Dorsolateral prefrontal cortex (tissue), 120 donors: ENCODE measurements at regions of chr14 and their contacts with region 1.

Region 1: DNA sequence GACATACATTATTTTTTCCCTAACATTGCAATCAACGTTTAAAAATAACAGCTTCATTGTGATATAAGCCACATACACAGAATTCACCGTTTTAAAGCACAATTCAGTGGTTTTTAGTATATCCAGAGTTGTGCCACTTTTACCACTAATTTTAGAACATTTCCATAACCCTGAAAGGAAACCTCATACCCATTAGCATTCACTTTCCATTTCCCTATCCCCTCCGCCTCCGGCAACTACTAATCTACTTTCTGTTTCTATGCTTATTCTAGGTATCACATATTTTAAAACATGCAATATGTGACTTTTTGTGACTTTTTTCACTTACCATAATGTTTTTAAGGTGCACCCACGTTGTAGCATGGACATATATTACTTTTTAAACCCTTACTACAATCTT is 55.6 kb upstream of the ISM2 start:
- DNase-seq: no peak
- H3K4me3 ChIP-seq: peak overlapping the region in 6 of 59 donors; percentile 1 to 34 (median 7)
- H3K27ac ChIP-seq: peak overlapping the region; percentile 19 to 99 (median 91)
- H3K27me3 ChIP-seq: no peaks in the 10 kb centered on the region
- CTCF ChIP-seq: no peak

Region 2: DNA sequence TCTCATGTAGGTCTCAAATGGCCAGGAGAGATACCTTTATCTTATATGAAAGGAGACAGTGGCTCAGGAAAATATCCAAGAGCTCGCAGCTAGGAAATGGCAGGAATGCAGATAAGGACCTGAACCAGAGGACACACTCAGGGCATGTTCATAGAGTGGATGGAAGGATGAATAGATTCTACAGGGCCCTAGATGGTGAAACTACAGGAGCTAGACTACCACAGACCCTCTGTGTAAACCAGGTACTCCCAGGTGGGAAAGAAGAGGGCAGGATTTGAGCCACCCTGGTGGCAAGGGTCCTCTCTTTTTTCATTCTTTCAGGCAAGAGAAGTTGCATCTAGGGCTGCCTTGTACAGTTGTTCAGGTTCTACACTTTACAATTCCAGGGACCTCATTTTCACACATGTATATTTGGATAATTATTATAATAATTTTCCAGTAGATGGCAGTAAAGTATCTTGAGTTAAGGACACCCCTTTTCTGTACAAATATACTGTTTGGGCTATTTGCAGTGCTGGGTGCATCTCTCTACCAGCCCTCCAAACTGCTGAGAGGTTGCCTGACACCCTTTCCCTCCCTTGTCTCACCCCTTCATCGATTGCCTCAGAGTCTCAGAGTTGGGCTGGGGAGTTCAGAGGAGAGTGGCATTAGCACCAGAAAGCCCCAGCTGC is 402.2 kb before region 1 on chr14:
- intact Hi-C with region 1: loop called (anchors 5 to 10 kb)
- DNase-seq: no peak
- H3K4me3 ChIP-seq: no peak overlapping the region
- H3K27ac ChIP-seq: peak overlapping the region in 12 of 59 donors; percentile 0 to 63 (median 26)
- H3K27me3 ChIP-seq: no peaks in the 10 kb centered on the region
- CTCF ChIP-seq: peak in 53 of 56 donors; percentile 28 to 67 (median 48)

Region 3: GRCh38 chr14:77301103-77301502 is 253.1 kb before region 1 on chr14:
- intact Hi-C with region 1: loop called in 1 of 2 experiments (anchors 5 kb)
- DNase-seq: peak; percentile 65 to 94 (median 88)
- H3K4me3 ChIP-seq: peak overlapping the region in 28 of 59 donors; percentile 3 to 43 (median 20)
- H3K27ac ChIP-seq: peak overlapping the region in 58 of 59 donors; percentile 86 to 100 (median 99)
- H3K27me3 ChIP-seq: no peaks in the 10 kb centered on the region
- CTCF ChIP-seq: peak; percentile 69 to 99 (median 90)

Region 4: DNA sequence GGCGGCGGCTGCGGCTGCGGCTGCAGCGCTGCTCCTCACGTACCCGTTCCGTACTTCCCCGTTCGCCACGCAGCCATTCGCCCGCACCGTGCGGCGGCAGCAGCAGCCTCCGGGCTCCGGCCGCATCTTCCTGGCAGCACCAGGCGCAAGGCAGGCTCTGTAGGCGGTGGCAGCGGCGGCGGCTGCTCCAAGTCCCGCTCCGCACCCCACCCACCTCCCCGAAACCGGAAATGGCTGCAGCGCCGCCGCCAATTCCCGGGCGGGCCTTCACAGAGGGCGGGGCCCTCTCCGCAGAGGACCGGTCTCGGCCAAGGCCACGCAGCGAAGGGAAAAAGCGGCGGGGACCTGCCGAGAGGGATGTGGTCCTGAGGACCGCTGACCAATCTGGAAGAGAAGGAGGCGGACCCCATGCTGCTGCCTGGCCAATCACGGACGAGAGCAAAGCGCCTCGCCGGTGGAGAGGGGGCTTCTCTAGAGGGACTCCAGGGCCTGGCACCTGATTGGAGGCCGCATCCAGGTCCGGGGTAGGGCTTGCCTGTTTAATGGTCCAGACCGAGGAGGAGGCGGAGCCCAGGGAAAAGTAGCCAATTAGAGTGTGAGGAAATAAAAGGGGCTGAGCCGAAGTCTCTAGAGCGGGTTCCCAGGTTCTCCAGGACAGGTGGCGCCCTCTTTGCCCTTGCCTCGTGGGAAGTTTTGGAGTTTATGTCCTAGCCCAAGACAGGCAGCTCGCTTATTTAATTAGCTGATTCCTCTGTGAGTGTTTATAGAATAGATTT is 62.4 kb after region 1 on chr14 and contains the start of gene SPTLC2:
- intact Hi-C with region 1: loop called (anchors 5 kb)
- DNase-seq: peak; percentile 98 to 100 (median 100)
- H3K4me3 ChIP-seq: peak within 1 kb of the TSS; percentile 60 to 99 (median 92)
- H3K27ac ChIP-seq: peak within 1 kb of the TSS; percentile 19 to 94 (median 88)
- H3K27me3 ChIP-seq: no peaks in the 10 kb centered on the region
- CTCF ChIP-seq: peak in 46 of 56 donors; percentile 13 to 66 (median 42)
- total RNA-seq, gene SPTLC2: 19.4 to 116 (median 48.8) TPM